CD4-positive, alpha-beta T cell (primary cell): ENCODE measurements at regions of chr9 and their contacts with region 1.

Region 1: DNA sequence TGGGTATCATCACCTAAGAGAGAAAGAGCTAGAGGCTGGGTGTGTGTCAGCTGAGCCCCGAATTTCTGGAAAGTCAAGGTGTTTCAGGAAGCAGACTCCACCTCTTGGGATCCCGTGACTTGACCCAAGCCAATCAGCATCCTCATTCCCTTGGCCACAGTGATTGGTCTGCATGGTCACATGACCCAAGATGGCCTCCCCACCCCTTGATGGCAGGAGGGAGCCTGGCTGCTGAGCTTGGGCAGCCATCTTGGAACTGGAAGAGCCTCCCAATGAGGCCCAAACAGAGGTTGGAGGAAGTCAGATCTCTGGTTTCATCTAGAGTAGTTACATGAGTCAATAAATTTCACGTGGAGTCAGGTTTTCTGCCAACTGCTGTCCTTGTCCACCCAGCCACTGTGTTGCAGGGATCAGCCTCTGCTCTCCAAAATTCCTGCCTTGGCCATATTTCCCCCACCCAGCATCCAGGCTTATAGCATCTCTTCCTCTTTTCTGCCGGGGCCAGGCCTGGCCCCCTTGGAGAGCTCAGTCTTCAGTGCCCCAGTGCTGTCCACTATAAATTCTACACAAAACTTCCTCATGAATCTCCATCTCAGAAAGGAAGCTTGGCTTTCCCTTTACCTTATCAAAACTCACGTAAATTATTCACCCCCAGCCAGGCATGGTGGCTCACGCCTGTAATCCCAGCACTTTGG is 17.2 kb upstream of the SUSD3 start:
- DNase-seq: no peak
- ATAC-seq: no peak
- H3K4me3 ChIP-seq: no peak overlapping the region
- H3K4me3 Mint-ChIP-seq: peak overlapping the region; percentile 7
- H3K27ac ChIP-seq: peak overlapping the region in 1 of 2 donors; percentile 57
- H3K27ac Mint-ChIP-seq: peak overlapping the region; percentile 85
- H3K4me1 ChIP-seq: peaks cover 65% of the 10 kb centered on the region
- H3K4me1 Mint-ChIP-seq: peaks cover 73% of the 10 kb centered on the region
- H3K27me3 ChIP-seq: no peaks in the 10 kb centered on the region
- H3K27me3 Mint-ChIP-seq: no peaks in the 10 kb centered on the region
- CTCF ChIP-seq: no peak

Region 2: DNA sequence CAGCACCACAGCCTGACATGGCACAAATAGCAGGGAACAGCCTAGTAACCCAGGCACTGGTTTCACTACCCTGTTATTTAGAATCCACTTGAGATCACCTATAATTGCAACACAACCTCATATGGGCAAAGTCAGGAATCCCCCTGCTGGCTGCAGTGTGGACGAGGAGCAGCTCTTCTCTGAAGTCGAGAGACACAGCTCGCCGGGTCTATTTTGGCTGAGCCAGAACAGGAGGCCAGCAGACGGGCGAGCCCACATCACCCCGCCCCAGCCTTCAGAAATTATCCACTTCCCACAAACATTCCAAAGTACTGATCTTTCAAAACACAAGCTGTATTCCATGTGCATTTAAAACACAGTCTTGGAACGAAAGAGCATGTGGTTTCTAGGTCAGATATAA is 1270.2 kb before region 1 on chr9:
- CTCF ChIA-PET with region 1: no interaction called
- POLR2A ChIA-PET with region 1: no interaction called
- intact Hi-C with region 1: no loop called
- DNase-seq: no peak
- ATAC-seq: no peak
- H3K4me3 ChIP-seq: no peak overlapping the region
- H3K4me3 Mint-ChIP-seq: no peak overlapping the region
- H3K27ac ChIP-seq: no peak overlapping the region
- H3K27ac Mint-ChIP-seq: no peak overlapping the region
- H3K4me1 ChIP-seq: peaks cover 4% of the 10 kb centered on the region
- H3K4me1 Mint-ChIP-seq: no peaks in the 10 kb centered on the region
- H3K27me3 ChIP-seq: peaks cover 9 to 19% of the 10 kb centered on the region in 2 experiments
- H3K27me3 Mint-ChIP-seq: peaks cover 53% of the 10 kb centered on the region
- CTCF ChIP-seq: no peak

Region 3: DNA sequence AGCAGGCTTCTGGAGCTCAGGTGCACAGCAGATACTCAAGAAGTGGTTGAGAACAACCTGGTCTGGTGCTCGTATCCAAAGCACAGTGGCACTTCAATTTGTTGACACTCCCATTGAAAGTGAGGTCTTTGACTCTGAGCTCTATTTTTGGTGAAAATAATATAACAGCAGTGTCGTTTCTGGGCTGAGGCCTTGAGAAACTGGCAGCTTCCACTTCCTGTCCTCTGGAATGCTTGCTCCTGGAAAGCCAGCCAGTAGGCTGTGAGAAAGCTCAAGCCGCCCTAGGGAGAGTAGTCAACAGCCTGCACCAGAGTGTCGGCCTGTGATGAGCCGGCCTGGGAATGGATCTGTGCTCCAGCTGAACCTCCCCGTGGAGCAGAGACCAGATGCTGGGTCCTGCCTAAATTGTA is 10.4 kb after region 1 on chr9:
- CTCF ChIA-PET with region 1: interaction called, 4 read pairs
- POLR2A ChIA-PET with region 1: interaction called, 16 read pairs
- intact Hi-C with region 1: no loop called
- DNase-seq: no peak
- ATAC-seq: no peak
- H3K4me3 ChIP-seq: no peak overlapping the region
- H3K4me3 Mint-ChIP-seq: no peak overlapping the region
- H3K27ac ChIP-seq: no peak overlapping the region
- H3K27ac Mint-ChIP-seq: no peak overlapping the region
- H3K4me1 ChIP-seq: peaks cover 38% of the 10 kb centered on the region
- H3K4me1 Mint-ChIP-seq: peaks cover 32% of the 10 kb centered on the region
- H3K27me3 ChIP-seq: no peaks in the 10 kb centered on the region
- H3K27me3 Mint-ChIP-seq: no peaks in the 10 kb centered on the region
- CTCF ChIP-seq: no peak

Region 4: GRCh38 chr9:93058355-93059096 is 17.3 kb after region 1 on chr9 and contains the start of gene SUSD3:
- CTCF ChIA-PET with region 1: interaction called, 3 read pairs
- POLR2A ChIA-PET with region 1: interaction called, 43 read pairs
- intact Hi-C with region 1: loop called in 1 of 2 experiments (anchors 2 kb)
- DNase-seq: peak; percentile 46 to 86 (median 69)
- ATAC-seq: peak; percentile 62
- H3K4me3 ChIP-seq: peak within 1 kb of the TSS; percentile 91
- H3K4me3 Mint-ChIP-seq: peak within 1 kb of the TSS; percentile 96
- H3K27ac ChIP-seq: peak within 1 kb of the TSS; percentile 83 to 90
- H3K27ac Mint-ChIP-seq: peak within 1 kb of the TSS; percentile 100
- H3K4me1 ChIP-seq: peaks cover 74% of the 10 kb centered on the region
- H3K4me1 Mint-ChIP-seq: peaks cover 74% of the 10 kb centered on the region
- H3K27me3 ChIP-seq: no peaks in the 10 kb centered on the region
- H3K27me3 Mint-ChIP-seq: no peaks in the 10 kb centered on the region
- CTCF ChIP-seq: no peak
- total RNA-seq, gene SUSD3: 33.9 to 35.6 TPM